ENCODE measurements at regions of chr7 and their contacts with region 1.

Region 1: DNA sequence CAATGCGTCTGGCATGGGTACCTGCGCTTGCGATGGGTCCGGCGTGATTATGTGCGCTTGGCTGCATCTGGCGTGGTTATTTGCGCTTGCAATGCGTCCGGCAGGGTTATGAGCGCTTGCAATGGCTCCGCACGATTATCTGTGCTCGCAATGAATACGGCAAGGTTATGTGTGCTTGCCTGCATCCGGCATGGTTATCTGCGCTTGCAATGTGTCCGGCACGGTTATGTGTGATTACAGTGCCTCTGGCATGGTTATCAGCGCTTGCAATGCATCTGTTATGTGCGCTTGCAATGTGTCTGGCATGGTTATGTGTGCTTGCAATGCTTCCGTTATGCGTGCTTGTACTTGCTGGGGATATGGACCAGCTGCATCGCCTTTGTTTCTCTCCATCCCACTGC is 37.7 kb downstream of the RBAK start:
- DNase-seq: no peak
- H3K4me3 Mint-ChIP-seq: no peak overlapping the region
- H3K27ac Mint-ChIP-seq: no peak overlapping the region
- H3K4me1 Mint-ChIP-seq: peaks cover 2% of the 10 kb centered on the region
- H3K27me3 Mint-ChIP-seq: peaks cover 14% of the 10 kb centered on the region

Region 2: DNA sequence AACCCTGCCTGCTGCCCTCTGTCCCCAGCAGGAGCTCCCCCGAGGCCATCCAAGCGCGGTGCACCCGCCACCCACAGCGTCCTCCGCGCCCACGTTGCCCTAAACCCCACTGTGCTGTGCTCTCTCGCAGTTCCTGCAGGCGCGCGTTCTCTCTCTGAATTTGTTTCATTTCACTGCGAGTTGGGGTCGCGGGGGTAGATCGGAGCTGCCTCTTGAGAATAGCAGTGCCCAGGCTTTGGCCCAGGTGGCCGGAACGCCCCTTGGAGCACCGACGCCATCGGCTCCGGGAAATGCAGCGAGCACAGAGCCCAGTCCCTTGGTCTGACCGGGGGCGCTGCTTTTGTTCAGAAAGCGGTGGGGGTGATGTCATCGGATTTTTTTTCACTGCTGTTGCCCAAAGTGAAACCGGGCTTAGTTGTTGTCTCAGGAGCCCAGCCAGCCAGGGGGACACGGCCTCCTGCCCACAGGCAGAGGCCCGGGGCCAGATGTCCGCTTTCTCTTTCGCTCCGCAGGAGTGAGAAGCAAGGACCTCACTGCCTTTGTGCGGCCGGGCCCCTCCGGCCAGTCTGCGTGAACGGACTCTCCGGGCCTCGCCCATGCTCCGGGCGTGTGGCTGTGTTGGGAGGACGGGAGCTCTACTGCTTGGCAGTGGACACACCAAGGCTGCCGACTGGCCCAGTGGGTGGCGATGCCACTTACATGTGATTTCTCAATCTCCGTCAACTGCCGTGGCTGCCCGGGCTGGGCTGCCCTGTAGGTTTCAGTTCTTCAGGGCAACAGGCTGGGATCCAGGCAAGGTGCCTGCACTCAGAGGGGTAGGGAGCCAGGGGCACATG is 358.1 kb before region 1 on chr7:
- CTCF ChIA-PET with region 1: no interaction called
- POLR2A ChIA-PET with region 1: no interaction called
- intact Hi-C with region 1: no loop called
- DNase-seq: peak; percentile 70
- H3K4me3 Mint-ChIP-seq: peak overlapping the region; percentile 80
- H3K27ac Mint-ChIP-seq: peak overlapping the region; percentile 72
- H3K4me1 Mint-ChIP-seq: peaks cover 37% of the 10 kb centered on the region
- H3K27me3 Mint-ChIP-seq: no peaks in the 10 kb centered on the region

Region 3: GRCh38 chr7:4797858-4798705 is 285.2 kb before region 1 on chr7:
- CTCF ChIA-PET with region 1: interaction called, 59 read pairs
- POLR2A ChIA-PET with region 1: no interaction called
- intact Hi-C with region 1: loop called (anchors 1 kb)
- DNase-seq: peak; percentile 74
- H3K4me3 Mint-ChIP-seq: no peak overlapping the region
- H3K27ac Mint-ChIP-seq: no peak overlapping the region
- H3K4me1 Mint-ChIP-seq: no peaks in the 10 kb centered on the region
- H3K27me3 Mint-ChIP-seq: no peaks in the 10 kb centered on the region

Region 4: GRCh38 chr7:4830176-4830575 is 253.1 kb before region 1 on chr7:
- CTCF ChIA-PET with region 1: interaction called, 32 read pairs
- POLR2A ChIA-PET with region 1: no interaction called
- intact Hi-C with region 1: loop called (anchors 10 kb)
- DNase-seq: peak; percentile 72
- H3K4me3 Mint-ChIP-seq: no peak overlapping the region
- H3K27ac Mint-ChIP-seq: no peak overlapping the region
- H3K4me1 Mint-ChIP-seq: peaks cover 2% of the 10 kb centered on the region
- H3K27me3 Mint-ChIP-seq: peaks cover 1% of the 10 kb centered on the region

Region 5: GRCh38 chr7:5139998-5140397 is 56.7 kb after region 1 on chr7:
- CTCF ChIA-PET with region 1: no interaction called
- POLR2A ChIA-PET with region 1: no interaction called
- intact Hi-C with region 1: no loop called
- DNase-seq: peak; percentile 37
- H3K4me3 Mint-ChIP-seq: no peak overlapping the region
- H3K27ac Mint-ChIP-seq: no peak overlapping the region
- H3K4me1 Mint-ChIP-seq: peaks cover 9% of the 10 kb centered on the region
- H3K27me3 Mint-ChIP-seq: no peaks in the 10 kb centered on the region

Region 6: DNA sequence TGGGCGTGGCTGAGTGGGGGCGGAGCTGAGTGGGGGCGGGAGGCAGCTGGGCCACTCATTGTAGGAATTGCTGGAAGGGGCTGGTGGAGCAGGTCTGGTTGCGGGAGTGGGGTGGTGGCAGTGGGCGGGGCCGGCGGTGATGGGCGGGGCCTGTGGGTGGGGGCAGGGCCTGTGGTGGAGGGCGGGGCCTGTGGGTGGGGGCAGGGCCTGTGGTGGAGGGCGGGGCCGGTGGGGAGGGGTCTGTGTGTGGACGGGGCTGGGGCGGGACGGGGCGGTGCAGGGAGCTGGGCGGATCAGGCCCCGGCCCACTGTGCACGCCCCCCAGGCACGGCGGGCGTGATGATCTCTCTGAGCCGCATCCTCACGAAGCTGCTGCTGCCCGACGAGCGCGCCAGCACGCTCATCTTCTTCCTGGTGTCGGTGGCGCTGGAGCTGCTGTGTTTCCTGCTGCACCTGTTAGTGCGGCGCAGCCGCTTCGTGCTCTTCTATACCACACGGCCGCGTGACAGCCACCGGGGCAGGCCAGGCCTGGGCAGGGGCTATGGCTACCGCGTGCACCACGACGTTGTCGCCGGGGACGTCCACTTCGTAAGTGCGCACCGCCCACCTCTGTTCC is 213.4 kb after region 1 on chr7:
- CTCF ChIA-PET with region 1: no interaction called
- POLR2A ChIA-PET with region 1: no interaction called
- intact Hi-C with region 1: no loop called
- DNase-seq: peak; percentile 78
- H3K4me3 Mint-ChIP-seq: peak overlapping the region; percentile 67
- H3K27ac Mint-ChIP-seq: no peak overlapping the region
- H3K4me1 Mint-ChIP-seq: peaks cover 15% of the 10 kb centered on the region
- H3K27me3 Mint-ChIP-seq: peaks cover 3% of the 10 kb centered on the region

Region 7: DNA sequence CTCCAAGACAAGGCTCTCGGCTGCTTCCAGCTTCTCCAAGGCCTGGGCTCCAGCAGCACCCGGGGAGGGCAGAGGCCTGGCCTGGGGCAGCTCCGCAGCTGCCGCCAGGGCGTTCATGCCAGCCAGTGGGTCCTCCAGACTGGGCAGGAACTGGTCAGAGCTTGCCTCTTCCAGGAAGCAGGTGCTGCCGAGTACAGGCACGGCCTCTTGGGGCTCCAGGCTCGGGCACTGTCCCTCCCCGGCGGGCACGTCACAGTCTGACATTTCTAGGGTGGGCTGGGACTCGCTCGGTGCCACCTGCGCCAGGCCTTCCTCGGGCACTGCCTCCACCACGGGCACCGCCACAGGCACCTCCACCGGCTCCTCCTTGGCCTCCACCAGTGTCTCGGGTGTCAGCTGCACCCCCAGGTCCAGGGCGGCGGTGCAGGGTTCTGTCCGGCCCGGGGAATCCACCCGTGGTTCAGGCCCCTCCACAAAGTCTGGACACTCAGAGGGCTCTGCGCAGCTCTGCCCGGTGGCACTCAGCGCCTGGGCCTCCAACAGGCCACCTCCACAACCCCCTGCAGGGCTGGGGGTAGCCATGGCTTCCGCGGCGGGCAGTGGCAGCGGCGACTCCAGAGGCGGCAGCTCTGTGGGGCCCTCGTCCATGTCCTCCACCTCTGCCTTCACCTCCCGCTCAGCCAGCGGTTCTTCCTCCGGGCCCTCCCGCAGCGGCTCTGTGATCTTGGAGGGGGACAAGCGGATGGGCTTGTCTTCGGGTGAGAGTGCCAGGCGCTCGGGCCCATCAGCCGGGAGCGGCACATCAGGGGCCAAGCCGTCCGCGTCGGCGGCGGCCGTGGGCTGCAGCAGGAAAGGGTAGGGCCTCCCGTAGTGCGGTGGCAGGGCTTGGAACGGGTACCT is 287.4 kb after region 1 on chr7:
- CTCF ChIA-PET with region 1: no interaction called
- POLR2A ChIA-PET with region 1: no interaction called
- intact Hi-C with region 1: no loop called
- DNase-seq: no peak
- H3K4me3 Mint-ChIP-seq: no peak overlapping the region
- H3K27ac Mint-ChIP-seq: no peak overlapping the region
- H3K4me1 Mint-ChIP-seq: peaks cover 5% of the 10 kb centered on the region
- H3K27me3 Mint-ChIP-seq: no peaks in the 10 kb centered on the region

Measured in activated CD4-positive, alpha-beta memory T cell treated with anti-CD3 and anti-CD28 coated beads for 36 hours (primary cell).